PC-9 (cell line): ENCODE measurements at regions of chr2 and their contacts with region 1.

Region 1: GRCh38 chr2:225494100-225494459 is 94.6 kb downstream of the NYAP2 start:
- DNase-seq: peak in 1 of 2 experiments; percentile 22
- H3K4me3 ChIP-seq: no peak overlapping the region
- H3K27ac ChIP-seq: no peak overlapping the region
- H3K4me1 ChIP-seq: no peaks in the 10 kb centered on the region
- H3K27me3 ChIP-seq: no peaks in the 10 kb centered on the region
- CTCF ChIP-seq: no peak

Region 2: DNA sequence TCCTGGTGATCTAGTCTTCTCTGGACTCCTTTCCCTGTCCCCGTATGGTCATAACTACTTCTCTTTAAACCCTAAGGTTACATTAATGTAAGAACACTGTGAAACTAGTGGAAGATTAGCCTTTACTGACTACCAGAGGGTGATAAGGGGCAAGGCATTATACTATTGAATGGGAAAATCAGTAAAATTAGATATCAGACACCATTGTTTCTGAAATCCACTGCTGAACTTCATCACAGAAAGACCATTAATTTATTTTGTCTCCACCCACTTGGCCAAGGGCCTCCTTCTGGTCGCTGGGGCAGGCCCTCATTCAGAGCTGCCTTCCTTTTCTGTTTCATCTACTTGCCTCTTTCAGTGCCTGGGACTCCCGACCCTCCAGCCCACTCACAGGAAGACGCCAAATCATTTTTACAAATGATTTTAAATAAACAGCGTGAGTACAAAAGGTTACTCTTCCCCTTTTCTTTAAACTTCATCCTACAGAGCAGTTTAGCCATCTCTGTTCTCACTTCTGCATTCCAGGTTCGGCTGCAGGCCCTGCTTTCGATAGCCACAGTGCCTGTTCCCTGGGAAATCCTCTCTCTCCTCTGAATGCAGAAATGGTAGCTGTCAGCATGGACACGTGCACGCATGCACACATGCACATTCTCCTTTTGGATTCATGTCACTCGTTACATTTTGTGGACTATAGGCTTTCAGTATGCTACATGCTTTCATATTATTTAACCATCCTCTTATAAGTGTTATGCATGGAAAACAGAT is 381.5 kb before region 1 on chr2:
- CTCF ChIA-PET with region 1: interaction called, 10 read pairs
- POLR2A ChIA-PET with region 1: no interaction called
- intact Hi-C with region 1: no loop called
- DNase-seq: no peak
- H3K4me3 ChIP-seq: no peak overlapping the region
- H3K27ac ChIP-seq: no peak overlapping the region
- H3K4me1 ChIP-seq: no peaks in the 10 kb centered on the region
- H3K27me3 ChIP-seq: no peaks in the 10 kb centered on the region
- CTCF ChIP-seq: no peak